ENCODE measurements at regions of chr17 and their contacts with region 1.

Region 1: GRCh38 chr17:4733073-4733531 is 1.9 kb downstream of the MED11 start:
- DNase-seq: peak in 2 of 5 donors; percentile 48 to 55
- ATAC-seq: no peak
- H3K4me3 ChIP-seq: no peak overlapping the region
- H3K27ac ChIP-seq: peak overlapping the region in 3 of 12 donors; percentile 24 to 91 (median 62)
- H3K4me1 ChIP-seq: peaks cover 0 to 55% (median 11%) of the 10 kb centered on the region in 12 donors
- H3K27me3 ChIP-seq: peaks cover 0 to 4% (median 0%) of the 10 kb centered on the region in 9 donors
- CTCF ChIP-seq: peak in 2 of 12 donors; percentile 8 to 10
- POLR2A ChIP-seq: no peak

Region 2: DNA sequence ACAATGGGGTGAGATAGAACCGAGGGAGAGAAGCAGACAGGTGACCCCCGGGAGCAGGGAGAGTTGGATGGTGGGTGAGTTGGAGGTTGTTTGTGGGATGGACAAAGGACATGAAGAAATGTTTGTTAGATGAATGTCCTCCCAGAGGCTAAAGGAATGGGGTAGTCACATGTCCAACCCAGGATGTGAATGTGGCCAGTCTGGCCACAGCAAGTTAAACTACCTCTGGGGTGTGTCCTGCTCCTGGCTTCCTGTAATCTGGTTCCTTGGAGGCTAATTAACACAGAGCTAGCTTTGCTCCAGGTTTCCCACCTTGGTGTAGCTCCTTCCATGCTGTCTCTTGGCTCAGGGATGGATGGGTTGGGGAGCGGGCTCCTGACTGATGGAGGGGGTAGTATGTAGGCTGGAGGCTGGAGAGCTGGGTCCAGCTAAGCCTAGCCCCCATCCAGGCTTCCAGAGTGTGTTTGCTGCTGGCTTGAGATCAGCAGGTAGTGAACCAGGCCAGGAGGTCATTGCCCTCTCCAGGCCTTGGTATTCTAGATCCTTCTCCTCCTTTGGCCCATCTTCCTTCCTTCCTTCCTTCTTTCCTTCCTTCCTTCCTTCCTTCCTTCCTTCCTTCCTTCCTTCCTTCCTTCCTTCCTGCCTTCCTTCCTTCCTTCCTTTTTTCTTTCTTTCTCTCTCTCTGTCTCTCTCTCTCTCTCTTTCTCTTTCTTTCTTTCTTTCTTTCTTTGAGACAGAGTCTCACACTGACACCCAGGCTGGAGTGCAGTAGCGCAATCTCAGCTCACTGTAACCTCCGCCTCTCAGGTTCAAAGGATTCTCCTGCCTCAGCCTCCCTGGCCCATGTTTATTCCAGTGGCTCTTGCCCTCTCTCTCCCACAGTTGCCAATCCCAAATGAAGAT is 338.6 kb before region 1 on chr17:
- intact Hi-C with region 1: no loop called
- DNase-seq: no peak
- ATAC-seq: no peak
- H3K4me3 ChIP-seq: no peak overlapping the region
- H3K27ac ChIP-seq: no peak overlapping the region
- H3K4me1 ChIP-seq: no peaks in the 10 kb centered on the region
- H3K27me3 ChIP-seq: no peaks in the 10 kb centered on the region
- CTCF ChIP-seq: no peak
- POLR2A ChIP-seq: no peak

Region 3: GRCh38 chr17:4665027-4665426 is 68.1 kb before region 1 on chr17:
- intact Hi-C with region 1: no loop called
- DNase-seq: no peak
- ATAC-seq: peak in 1 of 4 donors; percentile 20
- H3K4me3 ChIP-seq: no peak overlapping the region
- H3K27ac ChIP-seq: no peak overlapping the region
- H3K4me1 ChIP-seq: no peaks in the 10 kb centered on the region
- H3K27me3 ChIP-seq: peaks cover 0 to 5% (median 0%) of the 10 kb centered on the region in 9 donors
- CTCF ChIP-seq: no peak
- POLR2A ChIP-seq: no peak

Region 4: DNA sequence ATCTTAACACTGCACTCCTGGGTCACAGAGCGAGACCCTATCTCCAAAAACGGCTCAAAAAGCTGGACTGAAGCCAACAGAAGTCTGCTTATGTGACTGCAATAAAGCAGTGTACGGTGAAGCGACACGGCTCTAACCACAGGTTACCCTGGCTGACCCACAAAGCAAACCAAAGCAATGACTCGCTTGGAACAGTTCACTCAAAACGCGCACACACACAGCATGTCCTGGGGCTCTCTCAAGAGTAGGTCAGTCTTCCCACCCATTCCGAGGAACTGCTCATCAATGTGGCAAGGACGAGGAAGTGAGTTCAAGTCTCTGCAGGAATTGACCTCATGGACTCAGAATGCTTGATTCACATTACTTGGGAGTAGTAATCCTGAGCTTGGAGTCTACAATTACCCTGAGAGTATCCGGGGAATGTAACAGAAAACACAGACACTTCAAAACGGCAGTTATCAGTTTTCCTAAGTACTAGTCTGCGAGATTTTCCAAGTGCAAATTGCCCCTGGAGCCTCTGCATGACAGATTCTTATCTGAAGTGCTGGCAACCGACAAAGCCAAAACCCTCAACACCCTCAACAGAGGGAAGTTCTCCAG is 54.6 kb before region 1 on chr17:
- intact Hi-C with region 1: no loop called
- DNase-seq: no peak
- ATAC-seq: peak in 1 of 4 donors; percentile 11
- H3K4me3 ChIP-seq: no peak overlapping the region
- H3K27ac ChIP-seq: no peak overlapping the region
- H3K4me1 ChIP-seq: peaks cover 0 to 19% (median 0%) of the 10 kb centered on the region in 12 donors
- H3K27me3 ChIP-seq: no peaks in the 10 kb centered on the region
- CTCF ChIP-seq: no peak
- POLR2A ChIP-seq: no peak

Region 5: GRCh38 chr17:4709794-4710692 is 23.1 kb before region 1 on chr17 and contains the start of gene ARRB2:
- intact Hi-C with region 1: loop called in 3 of 10 experiments (anchors 1 to 2 kb)
- DNase-seq: peak; percentile 97 to 100 (median 98)
- ATAC-seq: peak; percentile 95
- H3K4me3 ChIP-seq: peak within 1 kb of the TSS; percentile 47 to 93 (median 72)
- H3K27ac ChIP-seq: peak within 1 kb of the TSS; percentile 33 to 94 (median 77)
- H3K4me1 ChIP-seq: peaks cover 0 to 42% (median 11%) of the 10 kb centered on the region in 12 donors
- H3K27me3 ChIP-seq: no peaks in the 10 kb centered on the region
- CTCF ChIP-seq: peak; percentile 37 to 80 (median 61)
- POLR2A ChIP-seq: peak in 1 of 2 donors; percentile 65
- total RNA-seq, gene ARRB2: 10.9 to 87.6 (median 23.0) TPM